Right ventricle myocardium inferior (tissue), 1 donor: ENCODE measurements at regions of chr18 and their contacts with region 1.

Region 1: DNA sequence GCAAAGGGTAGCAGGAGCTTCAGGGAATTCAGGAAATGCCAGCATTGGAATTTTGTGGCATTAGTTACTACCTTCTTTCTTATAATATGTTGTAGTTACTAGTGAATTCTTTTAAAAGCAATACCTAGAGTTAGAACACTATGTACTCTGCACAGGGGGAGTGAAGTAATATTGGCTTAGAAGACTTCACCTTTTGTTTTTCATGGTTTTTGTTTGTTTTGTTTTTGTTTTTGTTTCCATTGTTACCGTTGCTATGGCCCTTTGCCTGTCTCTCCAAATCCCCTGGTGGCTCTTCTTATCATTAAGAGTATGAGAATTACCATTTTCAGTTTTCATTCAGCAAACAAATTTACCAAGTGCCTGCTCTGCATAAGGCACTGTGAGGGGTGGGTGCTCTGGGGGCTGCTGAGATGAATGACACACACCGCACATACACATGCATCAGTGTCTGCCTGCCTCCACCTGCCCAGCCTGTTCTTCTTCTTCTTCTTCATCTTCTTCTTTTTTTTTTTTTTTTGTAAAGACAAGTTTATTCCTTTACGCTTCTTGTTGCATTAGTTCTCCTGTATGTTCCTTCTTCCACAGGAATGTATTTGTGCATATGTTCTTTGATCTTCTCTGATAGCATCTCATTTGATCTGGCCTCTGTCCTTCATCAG is 160.2 kb downstream of the HAUS1 start:
- DNase-seq: no peak
- ATAC-seq: peak; percentile 46

Region 2: DNA sequence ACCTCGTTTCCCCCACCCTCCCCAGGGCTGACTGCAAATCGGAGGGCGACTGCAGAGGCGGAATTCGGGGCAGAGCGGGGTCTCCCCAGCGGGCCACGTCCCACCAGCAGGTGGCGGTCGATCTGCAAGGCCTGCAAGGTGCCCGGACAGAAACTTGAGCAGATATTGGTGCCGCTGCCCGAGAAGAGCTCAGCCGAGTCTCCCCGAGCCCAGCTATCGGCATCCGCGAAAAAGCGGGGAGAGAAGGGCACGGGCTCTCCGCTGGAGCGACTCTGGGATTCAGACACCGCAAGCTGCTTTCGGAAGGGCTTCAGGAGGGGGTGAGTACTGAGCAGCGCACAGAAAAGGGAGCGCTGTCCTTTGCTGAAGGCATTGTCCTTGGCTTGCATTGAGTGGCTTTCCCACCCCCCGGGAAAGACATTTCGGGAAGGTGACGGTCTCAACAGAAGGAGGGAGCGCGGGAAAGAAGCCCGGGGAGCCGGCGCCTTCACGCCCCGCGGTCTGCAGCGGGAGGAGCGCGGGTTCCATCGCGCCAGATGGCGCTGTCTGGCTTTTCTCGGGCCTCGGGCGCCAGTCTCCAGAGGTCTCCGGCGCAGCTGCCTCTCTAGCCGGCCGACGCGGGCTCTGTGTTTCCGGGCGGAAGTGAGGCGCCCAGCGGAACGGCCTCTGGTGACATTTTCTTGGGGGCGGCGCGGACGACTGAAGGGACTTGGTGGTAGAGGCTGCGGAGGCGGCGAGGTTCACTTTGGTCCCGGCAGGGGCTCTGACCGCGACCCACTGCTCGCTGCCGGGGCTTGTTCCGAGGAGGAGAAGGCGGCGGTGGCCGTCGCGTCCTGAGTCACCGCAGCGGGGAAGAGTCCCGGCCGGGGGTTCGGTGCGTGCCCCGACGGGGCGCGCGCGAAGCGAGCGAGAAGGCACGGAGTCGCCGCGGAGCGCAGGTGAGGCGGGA is 90.7 kb before region 1 on chr18:
- intact Hi-C with region 1: loop called (anchors 2 kb)
- DNase-seq: peak; percentile 98
- ATAC-seq: peak; percentile 98

Region 3: DNA sequence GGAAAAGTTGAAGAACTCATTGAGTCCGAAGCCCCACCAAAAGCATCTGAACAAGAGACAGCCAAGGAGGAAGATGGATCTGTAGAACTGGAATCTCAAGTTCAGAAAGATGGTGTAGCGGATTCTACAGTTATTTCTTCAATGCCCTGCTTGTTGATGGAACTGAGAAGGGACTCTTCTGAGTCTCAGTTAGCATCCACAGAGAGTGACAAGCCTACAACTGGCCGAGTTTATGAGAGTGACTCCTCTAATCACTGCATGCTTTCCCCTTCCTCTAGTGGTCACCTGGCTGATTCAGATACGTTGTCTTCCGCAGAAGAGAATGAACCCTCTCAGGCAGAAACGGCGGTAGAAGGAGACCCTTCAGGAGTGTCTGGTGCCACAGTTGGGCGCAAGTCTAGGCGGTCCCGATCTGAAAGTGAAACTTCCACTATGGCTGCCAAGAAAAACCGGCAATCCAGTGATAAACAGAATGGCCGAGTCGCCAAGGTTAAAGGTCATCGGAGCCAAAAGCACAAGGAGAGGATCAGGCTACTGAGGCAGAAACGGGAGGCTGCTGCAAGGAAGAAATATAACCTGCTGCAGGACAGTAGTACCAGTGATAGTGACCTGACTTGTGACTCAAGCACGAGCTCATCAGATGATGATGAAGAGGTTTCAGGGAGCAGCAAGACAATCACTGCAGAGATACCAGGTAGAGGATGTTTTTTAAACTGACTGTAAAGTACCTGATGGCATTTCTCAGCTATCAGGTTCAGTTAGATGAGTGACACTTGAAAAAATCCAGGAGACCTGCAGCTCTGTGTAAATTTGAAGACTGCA is 48.3 kb before region 1 on chr18:
- intact Hi-C with region 1: loop called (anchors 5 kb)
- DNase-seq: no peak
- ATAC-seq: peak; percentile 52

Region 4: GRCh38 chr18:46917108-46917802 is 652.9 kb after region 1 on chr18 and contains the starts of genes KATNAL2 and PIAS2:
- intact Hi-C with region 1: loop called (anchors 10 kb)
- DNase-seq: peak; percentile 92
- ATAC-seq: peak; percentile 97
- total RNA-seq, gene KATNAL2: 2.7 TPM
- total RNA-seq, gene PIAS2: 24.3 TPM